Posterior vena cava (tissue), 2 donors: ENCODE measurements at regions of chr17 and their contacts with region 1.

Region 1: GRCh38 chr17:78925234-78925633 is at the start of gene TIMP2:
- DNase-seq: peak; percentile 97
- total RNA-seq, gene TIMP2: 484 to 701 TPM

Region 2: GRCh38 chr17:78873519-78874340 is 51.5 kb before region 1 on chr17:
- intact Hi-C with region 1: loop called in 1 of 2 experiments (anchors 5 kb)
- DNase-seq: no peak

Region 3: GRCh38 chr17:78883164-78884122 is 41.8 kb before region 1 on chr17:
- intact Hi-C with region 1: loop called in 1 of 2 experiments (anchors 5 kb)
- DNase-seq: peak; percentile 95

Region 4: GRCh38 chr17:79214940-79215604 is 289.8 kb after region 1 on chr17:
- intact Hi-C with region 1: no loop called
- DNase-seq: no peak

Region 5: DNA sequence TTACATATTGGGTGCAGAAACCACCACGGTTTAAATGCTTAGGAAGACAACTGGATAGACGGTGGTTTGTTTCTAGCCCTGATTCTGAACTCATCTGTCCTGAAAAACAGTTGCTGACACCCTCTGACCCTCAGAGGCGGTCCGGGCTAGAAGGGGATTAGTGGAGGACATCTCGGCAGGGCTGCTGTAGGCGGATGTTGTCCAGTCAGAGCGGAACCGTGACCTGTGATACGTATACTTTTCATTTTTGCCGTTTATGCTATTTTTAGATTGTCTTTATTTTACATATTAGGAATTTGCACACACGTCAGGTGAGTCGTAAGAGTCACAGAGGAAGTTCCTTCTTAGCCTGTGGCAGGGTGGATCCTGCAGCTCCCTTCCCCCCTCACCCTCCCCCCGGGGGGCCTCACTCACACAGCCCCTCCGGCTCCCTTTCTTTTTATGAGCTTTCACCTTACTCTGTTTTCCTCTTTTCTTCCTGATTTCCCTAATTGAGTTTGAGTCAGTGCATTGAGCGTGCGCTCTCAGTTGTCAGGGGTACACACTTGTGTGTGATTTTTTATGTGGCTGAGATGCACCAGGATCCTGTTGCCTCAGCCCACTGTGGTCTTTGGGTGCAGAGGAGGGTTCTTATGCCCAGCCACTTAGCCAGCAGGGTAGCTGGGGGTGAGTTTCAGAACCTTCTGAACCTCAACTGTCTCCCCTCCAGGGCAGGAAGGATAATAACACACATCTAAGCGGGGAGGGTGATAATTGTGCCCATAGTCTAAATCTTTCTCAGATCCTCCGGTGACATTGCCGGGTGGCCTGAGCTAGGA is 1855.4 kb after region 1 on chr17:
- intact Hi-C with region 1: loop called in 1 of 2 experiments (anchors 5 kb)
- DNase-seq: peak; percentile 79